ENCODE measurements at regions of chr16 and their contacts with region 1.

Region 1: GRCh38 chr16:69378760-69379159 is 7.0 kb downstream of the TERF2 start:
- DNase-seq: no peak
- CTCF ChIP-seq: no peak

Region 2: DNA sequence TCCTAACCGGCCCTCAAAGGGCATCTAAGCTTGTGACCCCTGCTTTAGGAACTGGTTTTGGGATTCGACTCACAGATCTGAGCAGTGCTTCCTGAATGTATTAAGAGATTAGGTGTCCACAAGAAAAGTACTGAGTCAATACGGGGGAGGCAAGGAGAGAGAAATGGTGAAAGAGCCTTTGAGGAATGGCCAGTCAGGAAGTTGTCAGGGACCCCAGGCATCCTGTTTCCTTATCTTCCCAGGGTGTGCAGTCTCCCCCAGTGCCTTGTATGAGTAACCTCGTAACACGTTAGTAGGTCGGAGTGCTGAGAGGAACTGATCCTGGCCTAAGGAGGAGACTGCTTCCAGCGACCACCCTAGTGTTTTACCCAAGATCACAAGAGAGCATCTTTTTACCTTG is 10.8 kb before region 1 on chr16:
- CTCF ChIA-PET with region 1: interaction called, 13 read pairs
- POLR2A ChIA-PET with region 1: no interaction called
- DNase-seq: no peak
- CTCF ChIP-seq: no peak

Region 3: GRCh38 chr16:69554495-69554894 is 175.7 kb after region 1 on chr16:
- CTCF ChIA-PET with region 1: no interaction called
- POLR2A ChIA-PET with region 1: no interaction called
- DNase-seq: no peak
- CTCF ChIP-seq: no peak